Activated CD4-positive, alpha-beta memory T cell treated with anti-CD3 and anti-CD28 coated beads for 36 hours (primary cell): ENCODE measurements at regions of chr10 and their contacts with region 1.

Region 1: DNA sequence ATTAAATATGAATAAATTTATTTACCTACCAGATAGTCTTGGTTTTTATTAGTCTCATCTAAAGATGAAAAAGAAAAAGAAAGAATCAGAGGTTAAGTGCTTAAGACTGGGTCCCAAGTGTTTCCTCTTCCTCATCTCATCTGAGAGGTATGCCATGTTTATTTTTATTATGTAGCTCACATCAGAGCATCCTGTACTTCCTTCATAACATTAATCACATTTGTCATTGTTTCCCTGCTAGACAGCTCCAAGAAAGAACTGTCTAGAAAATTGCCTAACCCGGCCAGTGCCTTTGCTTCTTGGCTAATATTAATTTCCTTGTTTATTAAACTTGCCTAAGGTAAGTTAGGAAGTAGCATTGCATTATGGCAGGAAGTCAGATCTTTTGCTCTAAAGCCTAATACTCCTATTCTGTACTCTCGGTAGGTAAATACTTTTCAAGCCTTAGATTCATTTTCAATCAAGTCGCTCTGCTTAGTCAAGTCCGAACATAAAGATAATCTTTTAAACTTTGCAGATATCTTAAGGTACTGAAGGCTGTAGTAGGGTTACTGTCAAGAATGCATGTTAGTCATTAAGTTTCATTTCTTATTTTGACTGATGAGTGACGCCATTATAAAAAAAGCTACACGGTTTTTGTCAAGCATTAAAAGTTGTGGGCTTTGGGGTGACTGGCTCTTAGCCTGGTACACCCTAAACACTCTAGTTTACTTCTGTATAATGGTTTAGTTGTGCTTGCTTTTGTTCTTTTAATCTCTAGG is 47.4 kb downstream of the ZMYND11 start:
- DNase-seq: peak; percentile 36
- H3K4me3 Mint-ChIP-seq: peak overlapping the region; percentile 24
- H3K27ac Mint-ChIP-seq: peak overlapping the region; percentile 80
- H3K4me1 Mint-ChIP-seq: peaks cover 36% of the 10 kb centered on the region
- H3K27me3 Mint-ChIP-seq: no peaks in the 10 kb centered on the region

Region 2: DNA sequence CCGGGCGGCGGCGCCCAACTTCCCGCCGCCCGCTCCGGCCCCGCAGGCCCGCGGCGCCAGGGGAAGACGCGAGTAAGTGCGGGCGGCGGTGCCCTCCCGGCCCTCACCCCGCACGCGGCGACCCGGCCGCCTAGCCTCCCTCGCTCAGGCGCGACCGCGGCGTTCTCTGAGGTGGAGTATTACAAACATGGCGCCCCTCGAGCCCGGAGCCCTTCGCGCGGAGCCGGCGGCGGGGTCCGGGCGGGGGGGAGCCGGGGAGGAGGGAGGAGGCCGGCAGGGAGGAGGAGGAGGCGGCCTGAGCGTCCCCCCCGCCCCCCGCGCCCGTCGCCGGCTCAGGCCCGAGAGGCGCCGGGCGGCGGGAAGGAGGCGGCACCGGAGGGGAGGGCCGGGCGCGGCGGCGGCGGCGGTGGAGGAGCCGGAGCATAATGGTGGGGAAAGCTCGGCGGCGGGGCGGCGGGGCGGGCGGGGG is 47.5 kb before region 1 on chr10 and contains the start of gene ZMYND11:
- CTCF ChIA-PET with region 1: no interaction called
- POLR2A ChIA-PET with region 1: no interaction called
- intact Hi-C with region 1: loop called (anchors 1 kb)
- DNase-seq: peak; percentile 68
- H3K4me3 Mint-ChIP-seq: peak within 1 kb of the TSS; percentile 79
- H3K27ac Mint-ChIP-seq: peak within 1 kb of the TSS; percentile 90
- H3K4me1 Mint-ChIP-seq: peaks cover 25% of the 10 kb centered on the region
- H3K27me3 Mint-ChIP-seq: no peaks in the 10 kb centered on the region
- total RNA-seq, gene ZMYND11: 15.9 to 19.4 TPM

Region 3: DNA sequence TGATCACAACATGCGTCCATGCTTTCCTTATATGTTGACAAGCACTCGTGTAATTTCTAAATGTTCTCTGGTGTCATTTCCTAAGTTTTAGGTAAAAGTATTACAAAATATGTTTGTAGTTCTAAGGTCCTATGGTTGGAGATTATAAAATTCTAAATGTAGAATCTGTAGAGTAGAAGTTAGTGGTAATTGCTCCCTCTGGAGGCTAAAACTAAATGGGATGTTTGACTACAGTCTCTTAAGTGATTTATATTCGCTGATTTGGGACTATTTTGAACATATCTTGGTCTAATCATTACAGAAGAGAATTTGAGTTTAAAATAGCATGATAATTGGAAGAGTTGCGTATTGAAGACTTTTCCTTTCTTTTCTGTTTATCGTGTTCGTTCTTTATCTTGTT is 26.7 kb after region 1 on chr10:
- CTCF ChIA-PET with region 1: no interaction called
- POLR2A ChIA-PET with region 1: no interaction called
- intact Hi-C with region 1: loop called (anchors 2 kb)
- DNase-seq: no peak
- H3K4me3 Mint-ChIP-seq: no peak overlapping the region
- H3K27ac Mint-ChIP-seq: no peak overlapping the region
- H3K4me1 Mint-ChIP-seq: peaks cover 4% of the 10 kb centered on the region
- H3K27me3 Mint-ChIP-seq: no peaks in the 10 kb centered on the region

Region 4: GRCh38 chr10:283916-284356 is 101.3 kb after region 1 on chr10:
- CTCF ChIA-PET with region 1: no interaction called
- POLR2A ChIA-PET with region 1: no interaction called
- intact Hi-C with region 1: loop called (anchors 2 kb)
- DNase-seq: peak; percentile 86
- H3K4me3 Mint-ChIP-seq: peak overlapping the region; percentile 35
- H3K27ac Mint-ChIP-seq: peak overlapping the region; percentile 79
- H3K4me1 Mint-ChIP-seq: peaks cover 30% of the 10 kb centered on the region
- H3K27me3 Mint-ChIP-seq: no peaks in the 10 kb centered on the region

Region 5: GRCh38 chr10:451021-451471 is 268.4 kb after region 1 on chr10:
- CTCF ChIA-PET with region 1: no interaction called
- POLR2A ChIA-PET with region 1: no interaction called
- intact Hi-C with region 1: loop called (anchors 2 kb)
- DNase-seq: peak; percentile 81
- H3K4me3 Mint-ChIP-seq: peak overlapping the region; percentile 67
- H3K27ac Mint-ChIP-seq: peak overlapping the region; percentile 63
- H3K4me1 Mint-ChIP-seq: peaks cover 47% of the 10 kb centered on the region
- H3K27me3 Mint-ChIP-seq: no peaks in the 10 kb centered on the region